Mammary epithelial cell (primary cell): ENCODE measurements at regions of chr3 and their contacts with region 1.

Region 1: GRCh38 chr3:120095226-120095978 is 1.2 kb upstream of the GSK3B start:
- DNase-seq: peak; percentile 93
- H3K4me3 ChIP-seq: peak overlapping the region; percentile 74 to 82 (median 78)
- H3K27ac ChIP-seq: peak overlapping the region; percentile 99
- H3K4me1 ChIP-seq: peaks cover 24% of the 10 kb centered on the region
- H3K27me3 ChIP-seq: no peaks in the 10 kb centered on the region
- CTCF ChIP-seq: no peak

Region 2: DNA sequence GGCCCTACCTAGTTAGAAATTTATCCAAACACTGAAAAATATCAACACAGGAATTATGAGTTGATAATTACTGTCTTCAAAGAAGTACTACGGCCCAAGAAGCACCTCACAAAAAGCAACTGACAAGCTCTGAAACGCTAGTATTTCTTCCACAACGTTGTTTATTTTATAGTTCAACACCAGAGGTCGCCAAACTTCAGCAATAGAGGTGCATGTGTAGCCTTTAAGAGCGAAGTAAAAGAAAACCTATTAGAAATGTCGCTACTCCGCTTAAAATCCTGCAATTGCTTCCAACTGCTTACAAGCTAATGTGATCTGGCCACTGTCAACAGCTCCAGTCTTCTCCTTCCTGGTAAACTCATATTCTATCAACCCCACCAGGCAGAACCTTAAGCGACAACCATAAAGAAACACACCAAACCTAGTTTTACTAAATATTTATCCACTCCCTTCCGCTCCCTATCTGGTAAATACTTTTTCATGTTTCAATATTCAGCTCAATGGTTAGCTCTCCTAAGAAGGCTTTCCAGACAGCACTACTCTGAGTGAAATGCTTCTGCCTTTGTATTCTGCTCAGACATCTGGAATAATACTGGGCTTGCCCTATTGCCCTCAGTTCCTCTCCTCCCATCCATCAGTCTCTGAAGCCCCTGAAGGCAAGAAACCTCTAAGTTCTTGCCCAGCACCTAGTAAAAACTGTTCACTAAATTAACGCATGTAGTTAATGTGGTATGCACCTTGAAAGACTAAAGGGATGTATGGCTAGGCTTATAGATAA is 203.3 kb before region 1 on chr3:
- CTCF ChIA-PET with region 1: no interaction called
- dilution Hi-C with region 1: no loop called
- in situ Hi-C with region 1: no loop called
- intact Hi-C with region 1: loop called (anchors 1 kb)
- DNase-seq: peak; percentile 56
- H3K4me3 ChIP-seq: no peak overlapping the region
- H3K27ac ChIP-seq: no peak overlapping the region
- H3K4me1 ChIP-seq: peaks cover 4% of the 10 kb centered on the region
- H3K27me3 ChIP-seq: no peaks in the 10 kb centered on the region
- CTCF ChIP-seq: peak; percentile 65 to 67

Region 3: GRCh38 chr3:119973289-119973688 is 122.1 kb before region 1 on chr3:
- CTCF ChIA-PET with region 1: no interaction called
- dilution Hi-C with region 1: no loop called
- in situ Hi-C with region 1: no loop called
- intact Hi-C with region 1: loop called (anchors 5 kb)
- DNase-seq: peak; percentile 59
- H3K4me3 ChIP-seq: no peak overlapping the region
- H3K27ac ChIP-seq: no peak overlapping the region
- H3K4me1 ChIP-seq: peaks cover 39% of the 10 kb centered on the region
- H3K27me3 ChIP-seq: no peaks in the 10 kb centered on the region
- CTCF ChIP-seq: no peak

Region 4: GRCh38 chr3:120129718-120130513 is 34.5 kb after region 1 on chr3:
- CTCF ChIA-PET with region 1: interaction called, 4 read pairs
- dilution Hi-C with region 1: no loop called
- in situ Hi-C with region 1: no loop called
- intact Hi-C with region 1: loop called (anchors 2 kb)
- DNase-seq: peak; percentile 28
- H3K4me3 ChIP-seq: no peak overlapping the region
- H3K27ac ChIP-seq: no peak overlapping the region
- H3K4me1 ChIP-seq: no peaks in the 10 kb centered on the region
- H3K27me3 ChIP-seq: no peaks in the 10 kb centered on the region
- CTCF ChIP-seq: no peak

Region 5: DNA sequence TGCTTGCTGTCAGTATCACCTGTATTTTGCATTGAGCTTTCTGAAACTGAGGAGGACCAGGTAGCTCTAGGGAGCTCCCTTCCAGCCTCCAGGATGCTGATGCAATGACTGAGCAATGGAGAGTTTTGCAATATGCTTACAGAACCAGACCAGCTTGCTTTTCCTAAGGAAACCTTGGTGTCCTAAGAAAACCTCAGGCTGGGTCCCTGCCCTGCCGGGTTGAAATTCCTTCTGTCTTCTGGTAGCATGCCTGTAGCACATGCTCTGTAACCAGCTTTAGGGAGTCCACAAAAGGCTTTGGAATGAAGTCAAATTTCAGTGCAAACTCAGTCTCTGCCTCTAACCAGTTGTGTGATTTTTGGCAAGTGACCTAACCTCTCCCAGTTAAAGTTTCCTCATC is 64.6 kb after region 1 on chr3:
- CTCF ChIA-PET with region 1: no interaction called
- dilution Hi-C with region 1: no loop called
- in situ Hi-C with region 1: no loop called
- intact Hi-C with region 1: loop called (anchors 1 kb)
- DNase-seq: peak; percentile 99
- H3K4me3 ChIP-seq: no peak overlapping the region
- H3K27ac ChIP-seq: peak overlapping the region; percentile 92
- H3K4me1 ChIP-seq: peaks cover 36% of the 10 kb centered on the region
- H3K27me3 ChIP-seq: no peaks in the 10 kb centered on the region
- CTCF ChIP-seq: no peak

Region 6: DNA sequence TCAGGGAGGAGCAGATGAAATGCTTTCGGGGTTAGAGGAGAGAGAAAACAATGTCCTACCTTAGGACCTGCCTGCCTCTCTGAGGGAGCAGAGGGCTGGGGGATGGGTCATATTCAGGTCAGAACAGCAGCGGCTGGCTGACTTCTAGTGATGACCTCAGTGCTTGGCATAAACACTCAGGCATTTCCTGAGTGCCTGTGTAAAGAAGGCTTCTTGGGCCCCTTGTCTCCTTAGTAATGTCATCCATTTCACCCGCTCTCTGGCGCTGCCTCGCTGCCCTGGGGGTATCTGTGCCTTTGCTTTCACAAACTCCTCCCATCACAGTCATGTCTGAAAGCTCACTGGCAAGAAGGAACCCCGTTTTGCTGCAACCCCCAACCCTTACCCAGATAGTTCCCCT is 81.7 kb after region 1 on chr3:
- CTCF ChIA-PET with region 1: no interaction called
- dilution Hi-C with region 1: loop called (anchors 5 kb)
- in situ Hi-C with region 1: loop called in 1 of 2 experiments (anchors 5 kb)
- intact Hi-C with region 1: loop called (anchors 1 kb)
- DNase-seq: peak; percentile 91
- H3K4me3 ChIP-seq: peak overlapping the region in 1 of 3 experiments; percentile 19
- H3K27ac ChIP-seq: peak overlapping the region; percentile 82
- H3K4me1 ChIP-seq: peaks cover 45% of the 10 kb centered on the region
- H3K27me3 ChIP-seq: no peaks in the 10 kb centered on the region
- CTCF ChIP-seq: peak in 1 of 2 donors; percentile 20

Region 7: GRCh38 chr3:120198305-120198878 is 103.0 kb after region 1 on chr3:
- CTCF ChIA-PET with region 1: no interaction called
- dilution Hi-C with region 1: no loop called
- in situ Hi-C with region 1: no loop called
- intact Hi-C with region 1: loop called (anchors 1 kb)
- DNase-seq: peak; percentile 67
- H3K4me3 ChIP-seq: no peak overlapping the region
- H3K27ac ChIP-seq: no peak overlapping the region
- H3K4me1 ChIP-seq: peaks cover 8% of the 10 kb centered on the region
- H3K27me3 ChIP-seq: no peaks in the 10 kb centered on the region
- CTCF ChIP-seq: peak; percentile 40 to 58